GM10248 (cell line): ENCODE measurements at regions of chr20 and their contacts with region 1.

Region 1: DNA sequence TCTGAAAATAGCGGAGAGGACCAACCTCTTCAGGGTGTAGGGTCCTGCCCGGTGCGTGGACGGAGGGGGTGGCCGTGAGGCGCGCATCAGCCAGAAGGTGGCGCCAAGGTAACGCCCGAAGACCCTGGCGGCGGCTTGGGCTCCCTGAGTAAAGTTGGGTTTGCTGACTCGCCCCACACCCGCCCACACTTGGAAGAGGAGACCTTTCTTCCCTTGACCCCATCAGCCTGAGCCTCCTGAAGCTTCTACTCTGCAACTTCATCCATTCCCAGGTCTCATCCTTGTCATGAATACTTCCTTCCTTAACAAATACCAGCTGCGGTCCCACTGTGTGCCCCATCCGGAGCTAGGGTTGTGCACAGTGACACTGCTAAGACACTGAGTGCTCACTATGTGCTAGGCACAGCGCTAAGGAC is 14.6 kb downstream of the CD40 start:
- DNase-seq: peak; percentile 83
- CTCF ChIP-seq: peak; percentile 90

Region 2: GRCh38 chr20:46108435-46108841 is 24.3 kb before region 1 on chr20:
- CTCF ChIA-PET with region 1: interaction called, 45 read pairs
- POLR2A ChIA-PET with region 1: no interaction called
- DNase-seq: peak; percentile 69
- CTCF ChIP-seq: peak; percentile 32

Region 3: DNA sequence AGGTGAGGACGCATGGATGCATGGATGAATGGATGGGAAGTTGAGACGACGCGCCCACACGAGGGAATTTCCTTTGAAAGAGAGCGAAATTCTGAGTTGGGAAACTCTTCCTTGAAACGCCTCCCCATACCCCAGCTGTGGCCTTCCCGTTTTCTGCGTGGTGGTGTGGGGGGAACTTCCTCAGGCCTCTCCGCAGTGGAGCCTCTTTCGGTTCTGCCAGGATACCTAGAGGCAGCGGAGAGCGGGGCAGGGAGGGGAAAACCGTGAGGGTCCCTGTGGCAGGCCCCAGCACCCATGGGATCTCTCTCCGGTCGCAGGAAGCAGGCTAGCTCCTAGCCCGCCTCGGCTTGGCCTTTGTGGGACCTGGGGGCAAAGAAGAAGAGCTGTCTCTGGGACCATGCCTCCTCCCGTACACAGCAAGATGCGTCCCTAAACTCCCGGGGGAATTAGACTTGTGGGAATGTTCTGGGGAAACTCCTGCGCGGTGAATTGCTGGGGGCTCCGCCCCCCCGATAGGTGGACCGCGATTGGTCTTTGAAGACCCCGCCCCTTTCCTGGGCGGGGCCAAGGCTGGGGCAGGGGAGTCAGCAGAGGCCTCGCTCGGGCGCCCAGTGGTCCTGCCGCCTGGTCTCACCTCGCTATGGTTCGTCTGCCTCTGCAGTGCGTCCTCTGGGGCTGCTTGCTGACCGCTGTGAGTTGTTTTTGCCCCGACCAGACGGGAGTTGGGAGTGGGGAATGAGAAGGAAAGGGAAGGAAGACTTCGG is 14.8 kb before region 1 on chr20 and contains the start of gene CD40:
- CTCF ChIA-PET with region 1: interaction called, 37 read pairs
- POLR2A ChIA-PET with region 1: no interaction called
- DNase-seq: peak; percentile 95
- CTCF ChIP-seq: no peak